ENCODE measurements at regions of chr6 and their contacts with region 1.

Region 1: GRCh38 chr6:43369174-43370022 is at the start of gene ZNF318:
- DNase-seq: peak; percentile 94
- CTCF ChIP-seq: no peak

Region 2: GRCh38 chr6:43383021-43383667 is 13.7 kb after region 1 on chr6:
- CTCF ChIA-PET with region 1: interaction called, 19 read pairs
- POLR2A ChIA-PET with region 1: interaction called, 8 read pairs
- DNase-seq: no peak
- CTCF ChIP-seq: no peak

Region 3: DNA sequence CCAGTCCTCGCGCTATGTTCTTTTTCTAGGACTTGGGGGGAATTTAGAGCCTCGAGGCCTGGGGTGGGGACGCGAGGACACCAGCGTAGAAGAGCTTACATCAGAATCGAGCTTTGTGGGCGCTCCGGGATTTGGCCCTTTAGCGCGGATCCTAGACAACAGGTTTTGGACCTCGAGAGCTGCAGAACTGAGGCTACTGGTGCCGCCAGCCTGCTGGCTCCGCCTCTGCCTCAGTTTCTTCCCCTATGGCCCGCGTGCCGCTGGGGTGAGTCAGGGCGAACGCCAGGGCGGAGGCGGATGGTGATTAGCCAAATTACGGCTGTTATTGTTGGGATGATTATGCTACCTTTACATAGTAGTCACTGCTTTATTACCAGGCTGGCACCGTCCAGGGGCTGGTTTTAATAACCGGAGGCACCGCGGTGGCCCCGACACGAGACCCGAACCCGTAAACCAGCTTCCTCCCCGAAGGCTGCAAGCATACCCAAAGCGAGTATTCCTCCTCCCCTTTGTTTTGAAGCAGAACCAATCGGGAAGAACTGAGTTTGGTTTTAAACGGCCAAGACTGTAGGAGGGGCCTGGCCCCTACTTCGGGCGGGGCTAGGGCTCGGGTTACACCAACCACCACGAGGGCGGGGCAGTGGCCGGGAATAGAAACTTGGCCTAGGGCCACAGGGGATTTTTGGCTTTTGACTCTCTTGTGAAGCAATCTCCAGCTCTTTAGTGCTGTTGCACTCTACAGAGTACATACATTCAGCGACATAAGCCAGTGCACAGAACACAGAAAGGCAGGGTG is 260.3 kb after region 1 on chr6:
- CTCF ChIA-PET with region 1: no interaction called
- POLR2A ChIA-PET with region 1: no interaction called
- DNase-seq: peak; percentile 98
- CTCF ChIP-seq: no peak